Psoas muscle (tissue), 8 donors: ENCODE measurements at regions of chr13 and their contacts with region 1.

Region 1: DNA sequence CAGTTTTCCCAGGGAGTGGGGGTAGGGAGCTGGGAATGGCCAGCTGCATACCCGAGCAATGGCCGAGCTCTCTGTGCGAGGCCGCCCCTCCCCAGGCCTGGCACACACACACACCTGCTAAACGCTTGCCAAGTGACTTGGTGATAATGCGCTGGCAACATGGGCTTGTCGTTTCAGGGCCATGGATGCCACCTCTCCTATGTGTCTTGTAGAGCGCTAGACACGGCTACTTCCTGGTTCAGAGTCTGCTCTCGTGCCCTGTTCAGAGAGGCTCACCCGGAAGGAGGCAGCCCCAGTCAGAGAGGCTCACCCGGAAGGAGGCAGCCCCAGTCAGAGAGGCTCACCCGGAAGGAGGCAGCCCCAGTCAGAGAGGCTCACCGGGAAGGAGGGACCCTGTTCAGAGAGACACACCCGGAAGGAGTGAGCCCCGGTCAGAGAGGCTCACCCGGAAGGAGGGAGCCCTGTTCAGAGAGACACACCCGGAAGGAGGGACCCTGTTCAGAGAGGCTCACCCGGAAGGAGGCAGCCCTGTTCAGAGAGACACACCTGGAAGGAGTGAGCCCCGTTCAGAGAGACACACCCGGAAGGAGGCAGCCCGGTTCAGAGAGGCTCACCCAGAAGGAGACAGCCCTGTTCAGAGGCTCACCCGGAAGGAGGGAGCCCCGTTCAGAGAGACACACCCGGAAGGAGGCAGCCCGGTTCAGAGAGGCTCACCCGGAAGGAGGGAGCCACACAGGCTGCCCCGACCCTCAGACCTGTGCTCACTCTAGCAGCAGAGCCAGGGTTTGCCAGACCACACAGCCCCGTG is 4.2 kb downstream of the ADPRHL1 start:
- DNase-seq: peak; percentile 67
- ATAC-seq: peak in 3 of 4 donors; percentile 0 to 4 (median 2)
- H3K4me3 ChIP-seq: peak overlapping the region; percentile 60
- H3K27ac ChIP-seq: peak overlapping the region; percentile 89
- H3K4me1 ChIP-seq: peaks cover 33% of the 10 kb centered on the region
- H3K27me3 ChIP-seq: no peaks in the 10 kb centered on the region
- CTCF ChIP-seq: no peak

Region 2: GRCh38 chr13:113390874-113391497 is 58.1 kb before region 1 on chr13:
- intact Hi-C with region 1: no loop called
- DNase-seq: no peak
- ATAC-seq: no peak
- H3K4me3 ChIP-seq: no peak overlapping the region
- H3K27ac ChIP-seq: no peak overlapping the region
- H3K4me1 ChIP-seq: peaks cover 8% of the 10 kb centered on the region
- H3K27me3 ChIP-seq: no peaks in the 10 kb centered on the region
- CTCF ChIP-seq: no peak

Region 3: DNA sequence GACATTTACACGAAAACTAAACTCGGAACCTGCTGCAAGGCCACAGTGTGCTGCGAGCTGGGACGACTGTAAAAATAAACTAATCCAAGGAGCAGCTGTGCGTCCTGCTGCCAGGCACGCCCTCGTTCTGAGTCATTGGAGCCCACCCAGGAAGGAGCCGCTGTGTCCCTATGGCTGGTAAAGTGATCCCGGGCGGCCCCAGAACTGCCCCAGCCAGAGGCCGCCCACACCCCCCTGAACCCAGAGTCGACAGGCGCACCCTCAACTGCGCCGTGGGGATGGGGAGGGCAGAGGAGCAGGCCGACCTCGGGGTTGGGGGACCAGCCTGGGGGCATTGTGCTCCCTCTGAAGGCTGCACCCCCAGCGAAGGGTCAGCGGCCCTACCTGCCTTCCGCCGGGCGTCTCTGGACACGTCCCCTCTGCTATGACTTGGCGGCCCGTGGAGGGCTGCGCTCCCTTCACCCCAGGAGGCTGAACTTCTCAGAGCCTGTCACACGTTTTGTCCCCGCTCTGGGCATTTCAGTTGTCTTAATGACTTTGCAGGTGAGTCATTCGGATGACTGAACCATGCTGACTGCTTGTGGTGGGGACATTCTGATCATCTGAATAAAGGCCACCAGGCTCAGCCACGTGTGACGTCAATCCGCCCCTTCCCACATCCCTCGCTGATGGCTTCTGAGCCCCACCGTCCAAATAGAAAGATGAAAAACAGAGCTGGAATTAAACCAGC is 38.5 kb before region 1 on chr13:
- intact Hi-C with region 1: loop called (anchors 5 kb)
- DNase-seq: peak; percentile 84 to 94
- ATAC-seq: peak; percentile 56 to 66 (median 60)
- H3K4me3 ChIP-seq: peak overlapping the region; percentile 66
- H3K27ac ChIP-seq: peak overlapping the region; percentile 99
- H3K4me1 ChIP-seq: peaks cover 64% of the 10 kb centered on the region
- H3K27me3 ChIP-seq: no peaks in the 10 kb centered on the region
- CTCF ChIP-seq: no peak

Region 4: DNA sequence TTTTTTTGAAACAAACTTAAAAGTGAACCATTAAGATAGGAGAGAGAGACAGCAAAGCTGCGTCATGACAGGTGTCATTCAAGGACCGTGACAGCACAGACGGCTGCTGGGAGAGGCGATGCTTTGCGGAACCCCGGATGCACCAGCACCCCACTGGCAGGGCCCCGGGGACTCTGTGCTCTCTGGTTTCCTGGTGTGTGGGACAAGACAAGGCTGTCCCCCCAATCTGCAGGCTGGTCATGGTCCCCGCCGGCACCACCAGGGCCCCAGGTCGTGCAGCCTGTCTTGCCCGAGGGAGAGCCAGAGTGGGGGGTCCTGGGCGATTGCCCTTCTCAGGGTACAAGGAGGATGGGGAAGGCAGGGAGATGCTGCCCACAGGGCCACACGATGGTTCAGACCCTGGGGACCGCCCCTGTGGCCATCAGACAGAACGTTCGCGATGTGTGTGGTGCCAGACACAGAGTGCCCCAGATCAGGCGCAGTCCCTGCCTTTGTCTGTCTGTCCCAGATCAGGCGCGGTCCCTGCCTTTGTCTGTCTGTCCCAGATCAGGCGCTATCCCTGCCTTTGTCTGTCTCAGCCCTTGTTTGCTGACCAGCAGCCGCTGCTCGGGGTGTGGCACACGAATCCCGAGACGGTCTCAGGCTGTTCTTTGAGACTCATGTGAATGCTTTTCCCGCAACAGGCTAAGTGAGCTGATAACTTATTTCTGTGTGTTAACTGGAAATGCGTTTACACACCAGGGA is 31.9 kb before region 1 on chr13:
- intact Hi-C with region 1: loop called (anchors 5 kb)
- DNase-seq: no peak
- ATAC-seq: no peak
- H3K4me3 ChIP-seq: no peak overlapping the region
- H3K27ac ChIP-seq: peak overlapping the region; percentile 93
- H3K4me1 ChIP-seq: peaks cover 23% of the 10 kb centered on the region
- H3K27me3 ChIP-seq: no peaks in the 10 kb centered on the region
- CTCF ChIP-seq: no peak

Region 5: DNA sequence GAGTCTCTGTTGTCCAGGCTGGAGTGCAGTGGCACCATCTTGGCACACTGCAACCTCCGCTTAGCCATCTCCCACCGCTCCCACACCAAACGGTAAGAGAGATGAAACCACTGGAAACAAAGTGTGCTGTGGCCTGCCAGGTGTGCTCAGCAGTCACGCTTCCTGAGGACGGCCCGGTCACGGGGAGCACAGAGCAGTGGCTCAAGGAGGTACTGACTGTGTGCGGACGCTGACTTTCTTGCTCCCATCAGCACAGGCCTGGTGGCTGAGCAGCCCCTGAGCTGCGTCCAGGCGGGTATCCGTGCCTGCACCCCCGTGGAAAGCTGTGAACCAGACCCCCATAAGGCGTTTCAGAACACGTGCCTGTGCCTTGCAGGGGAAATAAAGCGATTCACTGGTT is 21.5 kb before region 1 on chr13:
- intact Hi-C with region 1: loop called in 1 of 2 experiments (anchors 1 kb)
- DNase-seq: no peak
- ATAC-seq: no peak
- H3K4me3 ChIP-seq: no peak overlapping the region
- H3K27ac ChIP-seq: no peak overlapping the region
- H3K4me1 ChIP-seq: no peaks in the 10 kb centered on the region
- H3K27me3 ChIP-seq: no peaks in the 10 kb centered on the region
- CTCF ChIP-seq: no peak